ENCODE measurements at regions of chr4 and their contacts with region 1.

Region 1: GRCh38 chr4:112938461-112939058 is 110.9 kb upstream of the ANK2 start:
- DNase-seq: peak; percentile 7
- H3K4me3 ChIP-seq: no peak overlapping the region
- CTCF ChIP-seq: peak; percentile 50

Region 2: GRCh38 chr4:112817933-112818593 is 120.5 kb before region 1 on chr4:
- CTCF ChIA-PET with region 1: interaction called, 31 read pairs
- POLR2A ChIA-PET with region 1: no interaction called
- DNase-seq: peak; percentile 64
- H3K4me3 ChIP-seq: peak overlapping the region; percentile 57
- CTCF ChIP-seq: no peak

Region 3: DNA sequence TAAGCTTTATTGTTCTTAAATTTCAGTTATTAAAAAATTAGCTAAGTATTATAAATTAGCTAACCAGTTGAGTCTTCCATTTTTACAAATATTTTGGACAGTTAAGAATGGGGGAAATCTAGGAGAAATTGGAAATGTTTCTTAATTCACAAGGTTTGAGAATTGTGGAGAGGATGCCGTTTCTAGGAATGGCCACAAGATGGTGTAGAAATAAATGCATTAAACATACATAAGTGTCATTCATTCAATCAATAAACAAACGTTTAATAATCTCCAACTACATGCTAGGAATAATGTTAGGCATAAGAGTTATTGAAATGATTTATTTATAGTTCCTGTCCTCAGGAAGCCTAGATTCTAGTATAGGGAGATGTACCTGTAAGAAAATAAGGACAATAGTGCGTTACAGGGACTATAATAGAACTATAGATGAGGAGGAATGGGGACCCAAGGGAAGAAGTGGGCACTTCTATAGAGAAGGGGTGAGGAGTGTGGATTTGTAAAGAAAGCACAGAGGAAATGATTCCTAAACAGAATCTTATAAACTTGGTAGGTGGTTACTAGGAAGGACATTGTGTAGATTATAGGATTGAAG is 84.8 kb before region 1 on chr4:
- CTCF ChIA-PET with region 1: interaction called, 47 read pairs
- POLR2A ChIA-PET with region 1: no interaction called
- DNase-seq: no peak
- H3K4me3 ChIP-seq: no peak overlapping the region
- CTCF ChIP-seq: peak; percentile 31

Region 4: DNA sequence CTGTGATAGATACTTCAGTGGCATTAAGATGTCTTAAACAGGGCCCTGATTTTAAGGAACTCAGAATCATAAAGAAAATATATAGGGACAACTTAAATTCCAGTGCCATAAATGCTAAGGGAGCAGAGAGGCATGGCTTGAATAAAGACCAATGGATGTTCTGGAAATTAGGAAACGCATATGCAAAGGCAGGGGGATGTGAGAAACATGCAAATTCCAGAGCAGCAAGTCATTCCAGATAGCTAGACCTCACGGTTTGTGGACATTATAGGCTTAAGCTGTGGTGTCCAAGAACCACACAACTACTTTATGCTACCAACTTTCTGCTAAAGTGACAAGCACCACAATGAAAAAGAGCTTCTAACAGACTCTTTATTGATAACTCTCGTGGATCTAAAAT is 21.7 kb before region 1 on chr4:
- CTCF ChIA-PET with region 1: interaction called, 56 read pairs
- POLR2A ChIA-PET with region 1: no interaction called
- DNase-seq: peak; percentile 31
- H3K4me3 ChIP-seq: no peak overlapping the region
- CTCF ChIP-seq: no peak

Region 5: DNA sequence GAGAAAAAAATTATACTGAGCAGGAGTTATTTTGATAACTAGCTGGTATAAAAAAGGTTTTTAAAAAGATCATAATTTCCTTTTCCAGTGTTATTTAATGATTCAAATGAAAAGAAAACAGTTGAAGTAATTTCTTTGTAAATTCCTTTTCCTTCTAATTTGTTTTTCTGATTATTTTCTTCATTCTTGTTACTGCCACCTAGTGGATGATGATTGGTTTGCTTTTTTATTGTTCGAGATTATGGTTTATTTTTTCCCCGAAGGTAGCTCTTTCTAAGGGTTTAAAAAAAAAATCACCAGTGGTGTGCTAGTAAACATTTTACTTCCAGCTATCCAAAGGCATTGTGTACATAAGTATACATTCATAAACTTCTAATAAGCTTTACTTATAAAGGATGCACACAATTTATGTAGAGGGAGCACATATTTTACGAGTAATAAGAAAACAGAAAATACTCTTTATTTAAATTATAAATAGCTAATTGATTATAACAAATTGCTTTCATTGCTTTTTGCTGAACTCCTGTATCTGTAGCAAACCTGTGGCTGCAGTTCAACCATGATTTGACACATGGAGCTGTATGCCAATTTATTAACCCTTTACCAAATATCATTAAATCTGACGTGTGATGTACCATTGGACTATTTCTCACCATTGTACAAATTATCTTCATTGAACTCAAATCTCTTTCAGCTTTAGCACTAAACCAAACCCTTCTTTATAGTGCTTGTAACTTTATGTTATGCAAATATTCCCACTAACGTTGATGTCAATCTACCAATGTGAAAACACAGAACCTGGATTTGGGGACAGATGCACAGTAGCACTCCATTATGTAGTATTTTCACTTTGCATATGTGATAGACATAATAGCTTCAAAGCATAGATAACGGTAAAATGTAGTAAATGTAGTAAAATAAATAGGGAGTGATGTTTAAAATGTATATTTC is 13.1 kb after region 1 on chr4:
- CTCF ChIA-PET with region 1: interaction called, 33 read pairs
- POLR2A ChIA-PET with region 1: no interaction called
- DNase-seq: no peak
- H3K4me3 ChIP-seq: no peak overlapping the region
- CTCF ChIP-seq: peak; percentile 6

Region 6: DNA sequence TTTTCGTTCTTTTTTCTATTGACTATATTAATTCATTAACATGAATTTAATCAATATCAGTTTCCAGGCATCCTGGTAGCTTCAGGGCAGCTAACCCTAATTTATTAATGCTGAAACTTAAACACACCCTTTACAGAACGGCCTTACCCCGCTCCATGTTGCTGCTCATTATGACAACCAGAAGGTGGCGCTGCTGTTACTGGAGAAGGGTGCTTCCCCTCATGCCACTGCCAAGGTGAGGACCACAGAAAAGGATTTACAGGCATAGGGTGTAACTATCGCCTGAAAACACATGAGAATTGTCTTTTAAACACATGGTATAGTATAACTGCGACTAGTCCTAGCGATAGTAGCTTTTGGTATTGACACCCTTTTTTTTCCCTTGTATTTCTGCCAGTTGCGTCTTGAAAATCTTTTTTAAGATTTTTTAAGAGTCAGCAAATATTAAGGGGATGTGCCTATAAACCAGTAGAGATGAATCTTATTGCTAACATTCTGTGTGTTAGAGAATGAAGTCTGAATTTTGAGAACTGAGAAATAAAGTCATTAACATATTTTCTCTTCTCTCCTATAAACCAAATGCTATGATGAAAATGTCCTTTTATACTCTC is 339.9 kb after region 1 on chr4:
- CTCF ChIA-PET with region 1: no interaction called
- POLR2A ChIA-PET with region 1: no interaction called
- DNase-seq: no peak
- H3K4me3 ChIP-seq: no peak overlapping the region
- CTCF ChIP-seq: peak; percentile 95

Measured in AG04449 (cell line).